Ascending aorta (tissue), 2 donors: ENCODE measurements at regions of chr9 and their contacts with region 1.

Region 1: DNA sequence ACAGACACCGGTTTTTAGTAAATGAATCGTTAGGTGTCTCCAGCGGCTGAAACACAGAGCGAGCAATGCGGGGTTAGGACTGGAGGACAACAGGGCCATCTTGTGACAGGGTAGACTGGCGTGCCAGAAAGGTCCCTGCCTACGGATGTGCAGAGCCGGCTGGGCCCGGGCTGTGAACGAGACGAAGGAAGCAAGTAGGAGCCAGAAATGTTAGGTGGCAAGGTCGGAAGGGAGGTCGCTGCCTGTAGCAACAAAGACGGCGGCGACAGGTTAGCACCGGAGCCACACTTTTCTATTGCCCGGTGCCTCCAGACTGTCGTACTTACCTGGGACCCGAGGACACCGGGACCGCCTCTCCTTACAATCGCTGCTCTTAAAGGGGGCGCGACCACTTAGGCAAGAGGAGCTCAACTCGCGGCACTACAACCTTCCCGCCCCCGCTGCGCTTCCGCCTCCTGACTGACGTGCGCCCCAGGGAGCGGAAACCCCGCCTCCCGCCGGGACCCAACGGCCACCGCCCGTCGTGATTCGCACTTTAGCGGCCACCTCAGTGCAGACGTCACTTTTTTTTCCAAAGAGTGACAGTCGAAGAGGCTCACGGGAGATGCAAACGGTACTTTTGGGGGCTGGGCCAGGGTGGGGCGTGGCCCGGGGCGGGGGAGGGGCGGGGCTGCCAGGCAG is at the start of gene INIP:
- DNase-seq: peak; percentile 87 to 97
- H3K4me3 ChIP-seq: peak within 1 kb of the TSS; percentile 83
- H3K27ac ChIP-seq: peak within 1 kb of the TSS; percentile 83 to 85
- H3K4me1 ChIP-seq: peaks cover 0 to 8% of the 10 kb centered on the region in 2 donors
- H3K27me3 ChIP-seq: no peaks in the 10 kb centered on the region
- CTCF ChIP-seq: no peak
- total RNA-seq, gene INIP: 37.8 TPM

Region 2: DNA sequence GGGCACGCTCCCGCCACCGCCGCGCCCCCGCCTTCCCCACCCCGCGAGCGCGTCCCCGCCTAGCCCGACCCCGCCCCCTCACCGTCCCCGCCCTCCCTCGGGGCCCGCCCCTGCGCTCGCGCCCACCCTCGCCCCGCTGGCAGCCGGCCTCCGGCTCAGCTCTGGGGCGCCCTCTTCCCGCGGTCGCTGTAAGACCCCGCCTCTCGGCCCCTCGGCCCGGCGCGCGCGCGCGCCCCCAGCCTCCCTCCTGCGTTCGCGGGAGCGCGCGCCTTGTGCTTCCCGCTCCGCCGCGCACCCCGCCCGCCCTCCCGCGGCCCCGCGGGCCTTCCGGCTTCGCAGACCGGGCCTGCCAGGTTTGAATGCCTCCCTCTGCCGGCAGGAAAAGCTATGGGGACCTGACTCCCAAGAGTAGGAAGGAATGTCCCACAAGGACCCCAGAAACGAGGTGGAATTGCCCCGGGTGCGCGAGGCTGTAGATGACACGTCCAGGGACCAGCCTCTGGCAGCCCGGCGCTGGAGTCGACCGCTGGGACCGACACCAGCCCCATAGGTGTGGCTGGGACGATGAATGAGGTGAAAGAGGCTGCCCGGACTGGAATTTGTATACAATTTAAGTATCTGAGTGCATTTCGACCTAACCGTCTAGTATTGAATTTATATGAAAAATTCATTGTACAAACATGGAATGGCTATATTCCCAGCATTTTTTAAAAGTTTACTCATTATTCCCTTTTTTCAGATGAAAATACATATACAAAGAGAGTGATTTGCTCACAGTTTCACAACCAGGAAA is 384.0 kb before region 1 on chr9:
- intact Hi-C with region 1: loop called (anchors 5 kb)
- DNase-seq: peak; percentile 65 to 97
- H3K4me3 ChIP-seq: peak overlapping the region; percentile 83 to 95
- H3K27ac ChIP-seq: peak overlapping the region; percentile 98 to 100
- H3K4me1 ChIP-seq: peaks cover 0 to 7% of the 10 kb centered on the region in 2 donors
- H3K27me3 ChIP-seq: no peaks in the 10 kb centered on the region
- CTCF ChIP-seq: peak; percentile 31 to 77 (median 63)

Region 3: GRCh38 chr9:112366591-112366990 is 351.2 kb before region 1 on chr9:
- intact Hi-C with region 1: no loop called
- DNase-seq: no peak
- H3K4me3 ChIP-seq: no peak overlapping the region
- H3K27ac ChIP-seq: no peak overlapping the region
- H3K4me1 ChIP-seq: no peaks in the 10 kb centered on the region
- H3K27me3 ChIP-seq: no peaks in the 10 kb centered on the region
- CTCF ChIP-seq: no peak

Region 4: DNA sequence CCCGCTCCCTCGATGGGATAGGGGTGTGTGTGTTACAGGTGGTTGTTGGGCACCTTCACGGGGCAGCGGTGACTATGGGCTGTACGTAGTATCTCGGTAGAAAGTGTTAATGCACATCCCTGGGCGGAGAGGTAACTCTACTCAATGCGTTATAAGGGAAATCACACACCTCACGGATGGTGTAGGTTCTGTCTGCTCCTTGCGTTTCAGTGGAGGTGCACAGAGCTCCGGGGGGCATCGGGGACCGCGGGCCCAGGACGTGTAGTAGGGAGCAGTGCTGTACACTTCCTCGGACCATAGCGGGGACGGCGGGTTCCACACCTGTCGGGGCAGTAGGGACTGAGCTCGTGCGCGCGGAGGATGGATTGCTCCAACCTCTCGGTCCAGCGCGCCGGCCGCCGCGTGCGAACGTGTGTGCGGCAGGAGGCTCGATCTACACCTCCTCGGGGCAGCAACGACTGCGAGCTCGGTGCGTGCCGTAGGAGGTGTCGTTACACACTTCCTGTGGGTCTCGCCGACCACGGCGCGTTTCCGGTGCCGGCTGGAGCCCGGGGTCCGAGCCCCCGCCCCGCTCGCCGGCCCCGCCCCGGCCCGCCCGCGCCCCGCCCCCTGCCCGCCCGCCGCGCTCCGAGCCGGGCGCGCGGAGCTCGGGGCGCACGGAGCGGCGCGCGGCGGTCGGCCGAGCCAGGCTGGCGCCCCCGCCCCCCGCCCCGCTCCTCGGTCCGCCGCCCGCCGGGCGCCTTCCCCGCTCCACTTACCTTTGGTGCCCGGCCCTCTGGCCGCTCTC is 231.4 kb before region 1 on chr9 and contains the start of gene KIAA1958:
- intact Hi-C with region 1: loop called (anchors 2 kb)
- DNase-seq: peak; percentile 33 to 89
- H3K4me3 ChIP-seq: peak within 1 kb of the TSS; percentile 96 to 99
- H3K27ac ChIP-seq: peak within 1 kb of the TSS; percentile 80 to 89
- H3K4me1 ChIP-seq: peaks cover 3 to 10% of the 10 kb centered on the region in 2 donors
- H3K27me3 ChIP-seq: no peaks in the 10 kb centered on the region
- CTCF ChIP-seq: no peak
- total RNA-seq, gene KIAA1958: 2.0 TPM

Region 5: DNA sequence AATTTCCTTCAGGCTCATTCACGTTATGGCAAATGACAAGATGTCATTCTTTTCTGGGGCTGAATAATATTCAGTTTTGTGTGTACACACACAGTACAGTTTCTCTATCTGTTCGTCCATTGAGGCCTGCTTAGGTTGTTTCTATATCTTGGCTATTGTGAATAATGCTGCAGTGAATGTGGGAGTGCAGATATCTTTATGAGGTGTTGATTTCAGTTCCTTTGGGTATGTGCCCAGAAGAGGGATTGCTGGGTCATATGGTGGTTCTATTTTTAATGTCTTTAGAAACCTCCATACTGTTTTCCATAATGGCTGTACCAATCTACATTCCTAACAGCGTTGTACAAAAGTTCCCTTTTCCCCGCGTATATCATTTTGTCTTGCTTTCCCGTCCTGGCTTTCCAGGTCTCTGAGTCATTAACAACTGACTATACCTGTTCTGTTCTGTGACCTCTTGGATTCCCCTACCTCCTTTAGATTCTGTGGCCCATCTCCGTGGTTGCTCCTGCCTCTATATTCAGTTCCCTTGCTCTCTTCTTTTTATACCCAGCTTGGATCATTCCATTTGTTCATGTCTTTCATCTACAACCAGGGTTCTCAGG is 39.6 kb after region 1 on chr9:
- intact Hi-C with region 1: no loop called
- DNase-seq: no peak
- H3K4me3 ChIP-seq: no peak overlapping the region
- H3K27ac ChIP-seq: no peak overlapping the region
- H3K4me1 ChIP-seq: peaks cover 7 to 25% of the 10 kb centered on the region in 2 donors
- H3K27me3 ChIP-seq: no peaks in the 10 kb centered on the region
- CTCF ChIP-seq: no peak

Region 6: GRCh38 chr9:112793213-112793810 is 75.5 kb after region 1 on chr9:
- intact Hi-C with region 1: loop called (anchors 5 kb)
- DNase-seq: peak in 1 of 2 donors; percentile 72
- H3K4me3 ChIP-seq: no peak overlapping the region
- H3K27ac ChIP-seq: no peak overlapping the region
- H3K4me1 ChIP-seq: peaks cover 9 to 17% of the 10 kb centered on the region in 2 donors
- H3K27me3 ChIP-seq: no peaks in the 10 kb centered on the region
- CTCF ChIP-seq: peak; percentile 40 to 55 (median 44)

Region 7: GRCh38 chr9:113221003-113221799 is 503.4 kb after region 1 on chr9 and contains the starts of genes FKBP15 and SLC31A1:
- intact Hi-C with region 1: loop called (anchors 5 kb)
- DNase-seq: peak; percentile 95 to 99
- H3K4me3 ChIP-seq: peak within 1 kb of the TSS; percentile 92 to 99
- H3K27ac ChIP-seq: peak within 1 kb of the TSS; percentile 79 to 85
- H3K4me1 ChIP-seq: peaks cover 10 to 19% of the 10 kb centered on the region in 2 donors
- H3K27me3 ChIP-seq: no peaks in the 10 kb centered on the region
- CTCF ChIP-seq: no peak
- total RNA-seq, gene FKBP15: 24.4 TPM
- total RNA-seq, gene SLC31A1: 3.7 TPM

Region 8: GRCh38 chr9:113317777-113318176 is 600.0 kb after region 1 on chr9:
- intact Hi-C with region 1: no loop called
- DNase-seq: no peak
- H3K4me3 ChIP-seq: no peak overlapping the region
- H3K27ac ChIP-seq: no peak overlapping the region
- H3K4me1 ChIP-seq: peaks cover 0 to 14% of the 10 kb centered on the region in 2 donors
- H3K27me3 ChIP-seq: no peaks in the 10 kb centered on the region
- CTCF ChIP-seq: peak in 1 of 3 experiments; percentile 13